ENCODE measurements at regions of chr9 and their contacts with region 1.

Region 1: GRCh38 chr9:37465249-37466036 is at the start of gene ZBTB5:
- DNase-seq: peak; percentile 93 to 99 (median 99)
- ATAC-seq: peak; percentile 87
- H3K4me3 ChIP-seq: peak within 1 kb of the TSS; percentile 76
- H3K4me3 Mint-ChIP-seq: peak within 1 kb of the TSS; percentile 87 to 99 (median 96)
- H3K27ac ChIP-seq: peak within 1 kb of the TSS; percentile 89
- H3K27ac Mint-ChIP-seq: peak within 1 kb of the TSS; percentile 88 to 98 (median 95)
- H3K4me1 ChIP-seq: peaks cover 12 to 24% of the 10 kb centered on the region in 2 donors
- H3K4me1 Mint-ChIP-seq: peaks cover 27 to 43% (median 35%) of the 10 kb centered on the region in 7 donors
- H3K27me3 ChIP-seq: no peaks in the 10 kb centered on the region
- H3K27me3 Mint-ChIP-seq: no peaks in the 10 kb centered on the region
- total RNA-seq, gene ZBTB5: 8.5 to 16.8 (median 14.8) TPM

Region 2: DNA sequence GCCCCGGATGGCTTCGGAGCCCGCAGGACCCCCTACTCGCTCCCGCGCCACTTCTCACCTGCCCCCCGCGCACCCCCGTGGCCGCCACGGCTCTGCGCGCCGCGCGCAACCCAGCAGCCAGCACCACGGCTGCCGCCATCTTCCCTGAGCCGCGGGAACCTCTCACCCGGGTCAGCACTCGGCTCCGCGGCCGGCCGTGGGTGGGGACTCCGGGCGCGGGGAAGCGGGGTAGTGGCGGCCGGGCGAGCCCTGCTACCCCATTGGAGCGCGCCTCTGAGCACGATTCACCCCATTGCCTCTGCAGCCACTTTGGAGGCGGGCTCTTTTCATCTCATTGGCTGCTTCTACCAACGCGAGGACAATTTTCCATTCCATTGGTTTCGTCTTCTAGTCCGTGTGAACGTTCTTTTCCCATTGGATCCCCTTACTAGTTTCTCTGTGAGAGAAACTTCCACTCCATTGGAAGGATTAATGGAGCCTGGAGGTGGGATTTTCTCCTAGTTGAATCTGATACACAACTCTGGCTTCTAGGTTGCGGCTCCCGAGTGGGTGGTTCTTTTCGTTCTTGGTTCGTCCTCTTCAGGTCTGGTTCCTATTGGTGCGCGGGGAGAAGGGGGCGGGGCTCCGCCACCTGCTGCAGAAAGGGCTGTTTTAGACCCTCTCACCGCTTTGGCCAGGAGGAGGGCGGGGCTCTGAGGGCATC is 1650.5 kb before region 1 on chr9 and contains the start of gene HINT2:
- CTCF ChIA-PET with region 1: no interaction called
- POLR2A ChIA-PET with region 1: no interaction called
- intact Hi-C with region 1: loop called in 1 of 2 experiments (anchors 5 kb)
- DNase-seq: peak; percentile 84 to 98 (median 96)
- ATAC-seq: peak; percentile 86
- H3K4me3 ChIP-seq: peak within 1 kb of the TSS; percentile 100
- H3K4me3 Mint-ChIP-seq: peak within 1 kb of the TSS; percentile 91 to 100 (median 96)
- H3K27ac ChIP-seq: peak within 1 kb of the TSS; percentile 77
- H3K27ac Mint-ChIP-seq: peak within 1 kb of the TSS; percentile 87 to 99 (median 95)
- H3K4me1 ChIP-seq: peaks cover 19 to 27% of the 10 kb centered on the region in 2 donors
- H3K4me1 Mint-ChIP-seq: peaks cover 23 to 43% (median 38%) of the 10 kb centered on the region in 7 donors
- H3K27me3 ChIP-seq: no peaks in the 10 kb centered on the region
- H3K27me3 Mint-ChIP-seq: peaks cover 0 to 12% (median 0%) of the 10 kb centered on the region in 5 donors
- total RNA-seq, gene HINT2: 14.3 to 50.7 (median 22.2) TPM

Region 3: GRCh38 chr9:36765468-36766341 is 699.7 kb before region 1 on chr9:
- CTCF ChIA-PET with region 1: no interaction called
- POLR2A ChIA-PET with region 1: no interaction called
- intact Hi-C with region 1: loop called in 1 of 2 experiments (anchors 1 kb)
- DNase-seq: peak; percentile 81 to 96 (median 91)
- ATAC-seq: peak; percentile 100
- H3K4me3 ChIP-seq: peak overlapping the region; percentile 56
- H3K4me3 Mint-ChIP-seq: no peak overlapping the region
- H3K27ac ChIP-seq: peak overlapping the region; percentile 56
- H3K27ac Mint-ChIP-seq: no peak overlapping the region
- H3K4me1 ChIP-seq: no peaks in the 10 kb centered on the region
- H3K4me1 Mint-ChIP-seq: peaks cover 0 to 6% (median 2%) of the 10 kb centered on the region in 7 donors
- H3K27me3 ChIP-seq: no peaks in the 10 kb centered on the region
- H3K27me3 Mint-ChIP-seq: peaks cover 0 to 16% (median 11%) of the 10 kb centered on the region in 5 donors

Region 4: DNA sequence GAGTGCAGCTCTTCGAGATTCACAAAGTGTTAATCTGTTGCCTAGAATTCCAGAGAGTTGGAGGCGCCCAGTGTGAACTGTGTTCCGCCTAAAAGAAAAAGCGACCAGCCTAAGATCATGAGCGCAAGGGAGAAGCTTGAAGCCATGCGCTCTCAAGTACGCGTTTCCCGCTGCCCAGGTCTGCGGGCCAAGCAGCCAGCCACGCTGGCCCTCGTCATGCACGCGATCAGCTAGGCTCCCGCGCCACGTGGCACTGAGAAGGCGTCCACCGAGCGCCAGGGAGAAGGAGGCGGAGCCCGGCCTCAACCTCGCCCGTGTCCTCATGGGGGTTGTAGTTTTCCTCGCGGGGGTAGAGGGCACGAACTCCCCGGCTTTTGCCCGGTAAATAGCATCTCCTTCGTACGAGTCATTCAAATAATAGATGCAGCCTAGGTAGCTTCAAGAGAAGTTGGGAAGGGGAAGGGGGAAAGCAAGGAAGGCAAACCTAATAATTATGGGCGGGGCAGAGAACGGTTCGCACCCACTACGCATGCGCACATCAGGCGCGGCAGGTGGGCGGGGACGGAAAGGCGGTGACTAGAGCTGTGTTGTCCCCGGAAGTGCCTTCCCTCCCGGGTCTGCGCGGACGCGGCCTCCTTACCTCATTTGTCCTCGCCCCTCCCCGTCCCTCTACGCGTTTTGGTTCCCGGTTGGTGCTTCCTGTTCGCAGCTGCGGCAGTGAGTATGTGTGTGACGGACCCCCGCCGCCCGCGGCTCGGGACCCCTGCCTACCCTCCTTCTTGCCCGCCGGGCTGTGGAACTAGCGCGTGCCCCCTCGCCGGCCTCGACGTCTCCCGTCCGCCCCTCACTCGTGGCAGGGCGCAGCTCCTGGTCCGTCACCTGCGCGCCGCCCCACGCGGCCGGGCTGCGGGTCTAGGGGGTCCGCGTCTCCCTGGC is 345.3 kb before region 1 on chr9 and contains the start of gene ZCCHC7:
- CTCF ChIA-PET with region 1: no interaction called
- POLR2A ChIA-PET with region 1: no interaction called
- intact Hi-C with region 1: loop called (anchors 1 kb)
- DNase-seq: peak; percentile 95 to 99 (median 98)
- ATAC-seq: peak; percentile 97
- H3K4me3 ChIP-seq: peak within 1 kb of the TSS; percentile 93
- H3K4me3 Mint-ChIP-seq: peak within 1 kb of the TSS; percentile 88 to 99 (median 96)
- H3K27ac ChIP-seq: peak within 1 kb of the TSS; percentile 100
- H3K27ac Mint-ChIP-seq: peak within 1 kb of the TSS; percentile 93 to 100 (median 97)
- H3K4me1 ChIP-seq: peaks cover 11 to 25% of the 10 kb centered on the region in 2 donors
- H3K4me1 Mint-ChIP-seq: peaks cover 16 to 42% (median 32%) of the 10 kb centered on the region in 7 donors
- H3K27me3 ChIP-seq: no peaks in the 10 kb centered on the region
- H3K27me3 Mint-ChIP-seq: no peaks in the 10 kb centered on the region
- total RNA-seq, gene ZCCHC7: 26.1 to 47.1 (median 40.9) TPM

Region 5: GRCh38 chr9:37437621-37438020 is 27.8 kb before region 1 on chr9:
- CTCF ChIA-PET with region 1: no interaction called
- POLR2A ChIA-PET with region 1: no interaction called
- intact Hi-C with region 1: no loop called
- DNase-seq: no peak
- ATAC-seq: no peak
- H3K4me3 ChIP-seq: no peak overlapping the region
- H3K4me3 Mint-ChIP-seq: no peak overlapping the region
- H3K27ac ChIP-seq: no peak overlapping the region
- H3K27ac Mint-ChIP-seq: peak overlapping the region in 1 of 9 donors; percentile 57
- H3K4me1 ChIP-seq: no peaks in the 10 kb centered on the region
- H3K4me1 Mint-ChIP-seq: peaks cover 0 to 13% (median 3%) of the 10 kb centered on the region in 7 donors
- H3K27me3 ChIP-seq: no peaks in the 10 kb centered on the region
- H3K27me3 Mint-ChIP-seq: no peaks in the 10 kb centered on the region

Region 6: DNA sequence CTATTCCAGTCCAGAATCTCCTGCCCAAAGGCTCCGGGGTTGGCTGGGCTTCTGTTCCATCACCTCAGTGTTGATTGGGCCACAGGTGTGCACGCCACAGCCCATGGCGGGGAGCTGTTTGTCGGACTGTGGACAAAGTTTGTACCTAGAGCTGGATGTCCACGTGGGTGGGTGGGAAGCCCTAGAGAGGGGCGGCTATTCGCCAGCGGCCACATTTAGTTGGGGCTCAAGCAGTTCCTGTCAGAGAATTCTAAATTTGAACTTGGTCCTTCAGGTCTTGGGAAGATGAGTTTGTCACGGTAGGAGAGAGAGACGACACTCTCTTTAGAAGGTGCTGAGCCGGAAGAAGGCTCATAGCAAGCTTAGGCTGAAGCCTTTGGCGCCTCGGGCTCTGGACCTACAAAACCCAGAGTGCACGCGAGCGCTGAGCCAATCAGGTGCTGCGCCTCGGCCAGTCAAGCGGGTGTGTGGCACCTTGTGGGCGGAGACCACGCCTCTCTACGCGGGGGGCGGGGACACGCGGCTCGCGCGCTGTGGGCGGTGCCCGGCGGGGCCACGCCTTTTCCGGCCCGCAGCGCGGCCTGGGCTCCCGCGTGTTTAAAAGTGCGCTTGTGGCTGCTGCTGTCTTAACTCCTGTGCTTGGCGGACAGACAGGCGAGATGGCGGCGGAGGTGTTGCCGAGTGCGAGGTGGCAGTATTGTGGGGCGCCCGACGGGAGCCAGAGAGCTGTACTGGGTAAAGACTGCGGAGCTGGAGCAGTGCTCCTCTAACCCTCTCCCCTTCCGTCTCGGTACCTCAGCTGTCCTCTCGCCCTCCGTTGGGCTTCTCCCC is 20.2 kb after region 1 on chr9 and contains the start of gene POLR1E:
- CTCF ChIA-PET with region 1: interaction called, 3 read pairs
- POLR2A ChIA-PET with region 1: interaction called, 52 read pairs
- intact Hi-C with region 1: loop called (anchors 1 kb)
- DNase-seq: peak; percentile 92 to 99 (median 97)
- ATAC-seq: peak; percentile 100
- H3K4me3 ChIP-seq: peak within 1 kb of the TSS; percentile 82
- H3K4me3 Mint-ChIP-seq: peak within 1 kb of the TSS; percentile 88 to 98 (median 96)
- H3K27ac ChIP-seq: peak within 1 kb of the TSS; percentile 85
- H3K27ac Mint-ChIP-seq: peak within 1 kb of the TSS; percentile 88 to 97 (median 94)
- H3K4me1 ChIP-seq: peaks cover 20% of the 10 kb centered on the region in 2 donors
- H3K4me1 Mint-ChIP-seq: peaks cover 22 to 45% (median 39%) of the 10 kb centered on the region in 7 donors
- H3K27me3 ChIP-seq: no peaks in the 10 kb centered on the region
- H3K27me3 Mint-ChIP-seq: peaks cover 8 to 9% (median 8%) of the 10 kb centered on the region in 5 donors
- total RNA-seq, gene POLR1E: 24.7 to 40.0 (median 31.0) TPM

Region 7: DNA sequence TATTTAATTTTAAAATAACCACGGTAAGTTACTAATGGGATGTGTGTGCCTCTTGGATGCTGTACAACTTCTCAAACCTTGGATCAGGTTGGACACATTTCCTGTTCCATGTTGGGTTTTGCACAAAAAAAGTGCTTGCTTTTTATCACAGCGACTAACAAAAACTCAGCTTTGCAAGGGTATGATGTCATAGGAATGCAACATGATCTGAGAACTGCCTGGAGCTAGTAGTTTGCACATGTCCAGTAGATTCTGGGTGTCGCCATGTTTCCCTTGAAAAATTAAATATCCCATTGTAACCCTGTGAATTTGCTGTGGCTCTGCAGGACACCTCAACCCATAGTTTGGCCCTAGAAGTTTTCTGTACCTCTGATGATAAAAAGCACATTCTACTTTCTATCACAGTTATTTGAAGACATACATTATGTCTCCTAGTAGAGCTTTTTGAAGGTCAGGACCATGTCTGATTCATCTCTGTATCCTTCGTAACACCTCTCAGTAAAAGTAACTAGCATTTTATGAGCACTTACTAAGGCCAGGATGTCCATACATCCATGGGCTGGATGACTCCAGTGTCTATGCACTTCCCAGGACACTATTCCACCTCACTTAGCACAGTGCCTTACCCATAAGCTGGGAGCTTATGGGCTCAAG is 173.8 kb after region 1 on chr9:
- CTCF ChIA-PET with region 1: no interaction called
- POLR2A ChIA-PET with region 1: no interaction called
- intact Hi-C with region 1: no loop called
- DNase-seq: no peak
- ATAC-seq: no peak
- H3K4me3 ChIP-seq: no peak overlapping the region
- H3K4me3 Mint-ChIP-seq: no peak overlapping the region
- H3K27ac ChIP-seq: no peak overlapping the region
- H3K27ac Mint-ChIP-seq: no peak overlapping the region
- H3K4me1 ChIP-seq: no peaks in the 10 kb centered on the region
- H3K4me1 Mint-ChIP-seq: peaks cover 0 to 3% (median 0%) of the 10 kb centered on the region in 7 donors
- H3K27me3 ChIP-seq: peaks cover 0 to 6% of the 10 kb centered on the region in 2 donors
- H3K27me3 Mint-ChIP-seq: peaks cover 13 to 28% (median 18%) of the 10 kb centered on the region in 5 donors

Region 8: DNA sequence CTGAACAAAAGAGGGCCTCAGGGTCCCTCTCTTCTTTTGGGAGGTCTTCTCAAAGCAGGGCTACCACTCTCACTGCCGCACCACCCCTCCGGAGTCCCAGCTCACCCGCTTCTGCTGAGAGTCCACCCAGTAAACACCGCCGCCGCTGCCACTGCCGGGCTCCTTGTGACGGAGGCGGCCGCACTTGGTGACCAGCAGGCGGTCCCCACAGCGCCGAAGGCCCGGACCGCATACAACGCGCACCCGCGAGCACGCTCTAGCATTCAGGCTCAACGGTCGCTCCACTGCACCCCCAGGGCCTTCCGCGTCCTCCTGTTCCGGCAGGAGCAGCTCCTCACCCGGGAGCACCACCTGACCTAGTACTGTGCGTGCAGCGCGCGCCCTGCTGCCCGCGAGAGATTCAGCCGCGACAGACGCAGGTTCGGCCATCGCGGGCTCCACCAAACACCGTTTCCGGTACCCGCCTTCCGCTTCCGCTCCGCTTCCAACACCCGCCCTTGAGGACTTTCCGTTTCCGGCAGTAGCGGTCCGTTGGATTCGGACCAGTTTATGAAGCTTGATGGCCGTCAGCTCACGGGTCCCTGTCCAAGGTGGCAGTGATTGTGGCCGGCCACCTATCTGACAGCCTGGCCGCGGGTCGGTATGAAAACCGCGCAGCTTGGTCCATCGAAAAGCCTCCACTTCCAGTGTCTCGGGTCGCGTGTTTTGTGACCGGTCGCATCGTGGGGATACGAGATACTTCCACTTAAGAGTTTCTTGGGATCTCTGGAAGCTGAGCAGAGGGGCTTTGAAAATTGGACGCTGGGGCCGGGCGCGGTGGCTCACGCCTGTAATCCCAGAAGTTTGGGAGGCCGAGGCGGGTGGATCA is 319.4 kb after region 1 on chr9 and contains the start of gene EXOSC3:
- CTCF ChIA-PET with region 1: no interaction called
- POLR2A ChIA-PET with region 1: no interaction called
- intact Hi-C with region 1: loop called in 1 of 2 experiments (anchors 1 kb)
- DNase-seq: peak; percentile 66 to 85 (median 81)
- ATAC-seq: peak; percentile 92
- H3K4me3 ChIP-seq: peak within 1 kb of the TSS; percentile 92
- H3K4me3 Mint-ChIP-seq: peak within 1 kb of the TSS; percentile 96 to 98 (median 97)
- H3K27ac ChIP-seq: peak within 1 kb of the TSS; percentile 85
- H3K27ac Mint-ChIP-seq: peak within 1 kb of the TSS; percentile 95 to 98 (median 96)
- H3K4me1 ChIP-seq: peaks cover 18 to 21% of the 10 kb centered on the region in 2 donors
- H3K4me1 Mint-ChIP-seq: peaks cover 18 to 50% (median 40%) of the 10 kb centered on the region in 7 donors
- H3K27me3 ChIP-seq: no peaks in the 10 kb centered on the region
- H3K27me3 Mint-ChIP-seq: peaks cover 0 to 4% (median 0%) of the 10 kb centered on the region in 5 donors
- total RNA-seq, gene EXOSC3: 27.8 to 66.1 (median 60.7) TPM

Region 9: GRCh38 chr9:38068866-38069629 is 603.6 kb after region 1 on chr9 and contains the start of gene SHB:
- CTCF ChIA-PET with region 1: interaction called, 3 read pairs
- POLR2A ChIA-PET with region 1: no interaction called
- intact Hi-C with region 1: loop called in 1 of 2 experiments (anchors 10 kb)
- DNase-seq: peak; percentile 54 to 80 (median 75)
- ATAC-seq: peak; percentile 89
- H3K4me3 ChIP-seq: peak within 1 kb of the TSS; percentile 83
- H3K4me3 Mint-ChIP-seq: peak within 1 kb of the TSS; percentile 76 to 96 (median 88)
- H3K27ac ChIP-seq: peak within 1 kb of the TSS; percentile 76
- H3K27ac Mint-ChIP-seq: peak within 1 kb of the TSS in 8 of 9 donors; percentile 44 to 81 (median 73)
- H3K4me1 ChIP-seq: peaks cover 6 to 18% of the 10 kb centered on the region in 2 donors
- H3K4me1 Mint-ChIP-seq: peaks cover 5 to 39% (median 33%) of the 10 kb centered on the region in 7 donors
- H3K27me3 ChIP-seq: no peaks in the 10 kb centered on the region
- H3K27me3 Mint-ChIP-seq: peaks cover 0 to 58% (median 0%) of the 10 kb centered on the region in 5 donors
- total RNA-seq, gene SHB: 0.29 to 2.0 (median 0.81) TPM

Measured in naive thymus-derived CD4-positive, alpha-beta T cell (primary cell).